ENCODE measurements at regions of chr3 and their contacts with region 1.

Region 1: DNA sequence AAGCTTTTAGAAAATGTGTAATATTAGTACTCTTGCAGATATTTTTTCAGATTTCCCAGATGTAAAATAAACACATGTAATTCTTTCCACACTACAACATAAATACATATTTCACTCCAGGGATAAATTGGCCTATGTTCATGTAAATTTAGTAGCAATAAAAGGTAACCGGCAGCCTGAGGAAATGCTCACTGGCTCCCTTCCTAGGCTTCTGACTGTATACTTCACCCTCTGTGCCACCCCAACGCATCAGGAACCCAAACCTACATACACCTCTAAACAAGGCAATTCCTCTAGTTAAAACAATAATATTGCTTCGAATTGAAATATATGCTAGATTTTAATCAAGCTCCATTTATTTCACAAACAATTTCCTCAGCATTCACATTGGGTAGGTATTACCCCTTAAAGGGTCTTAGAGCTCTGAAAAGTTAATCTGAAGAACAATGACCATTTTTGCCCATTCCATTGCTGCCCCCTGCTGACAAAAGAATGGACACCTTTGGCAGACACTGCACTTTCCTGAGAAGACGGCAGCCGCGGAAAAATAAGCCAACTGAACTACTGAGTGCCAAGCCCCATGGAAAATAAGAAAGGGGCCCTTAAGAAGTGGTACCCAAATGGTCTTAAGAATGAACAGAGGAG is 212.5 kb downstream of the OSBPL10 start:
- DNase-seq: peak; percentile 42
- H3K4me3 Mint-ChIP-seq: peak overlapping the region; percentile 41
- H3K27ac Mint-ChIP-seq: peak overlapping the region; percentile 52
- H3K4me1 Mint-ChIP-seq: peaks cover 82% of the 10 kb centered on the region
- H3K27me3 Mint-ChIP-seq: no peaks in the 10 kb centered on the region

Region 2: DNA sequence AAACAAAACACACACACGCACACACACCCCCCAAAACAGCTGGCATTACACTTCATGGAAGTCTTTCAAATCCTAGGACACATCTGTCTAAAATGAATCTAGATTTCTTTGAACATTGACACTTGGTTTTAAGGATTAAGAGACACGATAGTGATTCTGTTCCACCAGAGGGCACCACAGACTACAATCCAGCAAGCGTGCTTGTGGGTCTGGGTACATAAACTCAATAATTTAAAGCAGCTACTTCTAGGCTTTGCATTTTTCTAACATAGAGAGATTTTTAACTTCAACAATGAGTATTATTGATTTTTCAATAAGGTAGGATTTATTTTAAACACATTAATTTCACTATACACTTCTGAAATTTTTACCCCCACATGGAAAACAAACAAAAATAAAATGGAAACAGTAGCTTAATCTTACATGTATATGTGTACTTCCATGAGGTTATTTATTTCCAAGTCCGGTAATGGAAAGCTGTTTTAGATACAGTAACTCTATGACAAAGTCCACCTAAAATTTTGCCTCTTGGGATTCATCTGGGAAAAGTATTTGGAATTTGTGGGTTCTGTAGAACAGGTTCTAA is 1726.2 kb before region 1 on chr3:
- intact Hi-C with region 1: loop called (anchors 5 kb)
- DNase-seq: peak; percentile 20
- H3K4me3 Mint-ChIP-seq: no peak overlapping the region
- H3K27ac Mint-ChIP-seq: no peak overlapping the region
- H3K4me1 Mint-ChIP-seq: no peaks in the 10 kb centered on the region
- H3K27me3 Mint-ChIP-seq: peaks cover 13% of the 10 kb centered on the region

Region 3: GRCh38 chr3:30847592-30847991 is 921.0 kb before region 1 on chr3:
- intact Hi-C with region 1: loop called (anchors 10 kb)
- DNase-seq: no peak
- H3K4me3 Mint-ChIP-seq: no peak overlapping the region
- H3K27ac Mint-ChIP-seq: no peak overlapping the region
- H3K4me1 Mint-ChIP-seq: peaks cover 30% of the 10 kb centered on the region
- H3K27me3 Mint-ChIP-seq: no peaks in the 10 kb centered on the region

Region 4: GRCh38 chr3:31550452-31551251 is 217.9 kb before region 1 on chr3:
- intact Hi-C with region 1: loop called (anchors 1 kb)
- DNase-seq: no peak
- H3K4me3 Mint-ChIP-seq: no peak overlapping the region
- H3K27ac Mint-ChIP-seq: no peak overlapping the region
- H3K4me1 Mint-ChIP-seq: peaks cover 75% of the 10 kb centered on the region
- H3K27me3 Mint-ChIP-seq: no peaks in the 10 kb centered on the region

Region 5: GRCh38 chr3:31724661-31725060 is 43.9 kb before region 1 on chr3:
- intact Hi-C with region 1: loop called (anchors 1 kb)
- DNase-seq: no peak
- H3K4me3 Mint-ChIP-seq: no peak overlapping the region
- H3K27ac Mint-ChIP-seq: no peak overlapping the region
- H3K4me1 Mint-ChIP-seq: no peaks in the 10 kb centered on the region
- H3K27me3 Mint-ChIP-seq: no peaks in the 10 kb centered on the region

Region 6: DNA sequence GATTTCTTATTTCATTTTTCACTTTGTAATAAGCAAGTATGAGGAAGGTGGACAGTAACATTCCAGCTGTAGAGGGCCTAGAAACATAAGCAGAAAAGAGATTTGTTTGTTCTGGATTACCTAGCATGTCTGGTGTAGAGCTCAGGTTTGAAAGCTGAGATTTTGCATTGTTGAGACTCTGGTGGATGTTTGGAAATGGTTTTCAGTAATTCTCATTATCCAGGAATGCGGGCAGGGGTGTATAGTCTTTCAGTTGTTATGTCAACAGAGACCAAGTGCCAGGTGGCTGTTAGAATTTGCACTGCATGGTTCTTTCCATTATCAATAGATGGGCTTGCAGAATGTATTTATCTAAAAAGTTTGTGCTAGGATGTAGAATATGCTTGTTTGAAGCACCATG is 348.7 kb after region 1 on chr3:
- intact Hi-C with region 1: loop called (anchors 2 kb)
- DNase-seq: no peak
- H3K4me3 Mint-ChIP-seq: no peak overlapping the region
- H3K27ac Mint-ChIP-seq: no peak overlapping the region
- H3K4me1 Mint-ChIP-seq: peaks cover 34% of the 10 kb centered on the region
- H3K27me3 Mint-ChIP-seq: no peaks in the 10 kb centered on the region

Measured in activated T-helper 1 cell treated with anti-CD3 and anti-CD28 coated beads, Interleukin-12 subunit alpha, Interleukin-12 subunit beta, Interleukin-2, Interleukin-4 antibody, amounts not matched to agents 30 ng/mL and 10 ng/mL and 1 ng/mL, durations not matched to agents 14 hours and 24 hours and 36 hours (primary cell).